GM10248 (cell line): ENCODE measurements at regions of chr5 and their contacts with region 1.

Region 1: GRCh38 chr5:78829811-78830527 is 155.1 kb downstream of the ARSB start:
- DNase-seq: no peak
- CTCF ChIP-seq: no peak

Region 2: DNA sequence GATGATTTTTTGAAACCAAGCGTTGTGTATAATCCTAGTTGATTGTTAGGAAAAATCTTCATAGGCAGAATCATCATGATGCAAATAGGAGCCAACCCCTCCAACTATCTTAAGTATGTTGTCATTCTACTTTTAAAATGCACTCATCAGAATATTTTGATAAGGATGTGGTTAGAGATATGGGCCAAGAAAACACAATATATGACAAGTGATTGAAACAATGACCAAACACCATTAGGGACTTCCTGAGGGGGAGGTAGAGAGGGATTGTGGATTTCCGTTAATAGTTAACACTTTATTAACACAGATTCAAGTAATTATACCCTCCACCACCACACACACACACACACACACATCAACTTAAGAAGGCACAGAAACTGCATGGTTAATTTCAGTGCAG is 11.8 kb after region 1 on chr5:
- CTCF ChIA-PET with region 1: interaction called, 14 read pairs
- POLR2A ChIA-PET with region 1: interaction called, 3 read pairs
- DNase-seq: no peak
- CTCF ChIP-seq: no peak

Region 3: GRCh38 chr5:78886341-78887230 is 56.6 kb after region 1 on chr5:
- CTCF ChIA-PET with region 1: no interaction called
- POLR2A ChIA-PET with region 1: no interaction called
- DNase-seq: no peak
- CTCF ChIP-seq: peak; percentile 27

Region 4: GRCh38 chr5:78958672-78959445 is 128.9 kb after region 1 on chr5:
- CTCF ChIA-PET with region 1: no interaction called
- POLR2A ChIA-PET with region 1: no interaction called
- DNase-seq: no peak
- CTCF ChIP-seq: no peak